HEK293 (cell line): ENCODE measurements at regions of chr16 and their contacts with region 1.

Region 1: DNA sequence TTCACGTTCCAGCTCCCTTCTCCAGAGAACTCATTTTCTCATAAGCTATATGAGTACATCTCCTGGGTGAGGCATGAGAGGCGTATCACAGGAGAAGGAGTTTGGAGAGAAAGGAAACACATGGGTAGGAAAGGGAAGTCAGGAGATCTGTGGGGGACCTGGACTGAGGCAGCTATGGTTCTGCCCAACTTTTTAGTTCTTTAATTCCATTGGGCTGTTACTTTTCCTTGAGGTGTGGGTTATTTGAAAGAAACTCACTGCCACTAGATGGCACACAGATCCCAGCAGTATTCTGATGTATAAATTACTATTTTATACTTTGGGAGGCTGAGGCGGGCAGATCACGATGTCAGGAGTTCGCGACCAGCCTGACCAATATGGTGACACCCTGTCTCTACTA is 63.6 kb downstream of the NUP93 start:
- H3K4me3 ChIP-seq: no peak overlapping the region
- H3K27ac ChIP-seq: no peak overlapping the region
- H3K4me1 ChIP-seq: peaks cover 11% of the 10 kb centered on the region
- CTCF ChIP-seq: no peak; the same call in 1 of the 2 replicates

Region 2: GRCh38 chr16:56851671-56852400 is 58.3 kb after region 1 on chr16:
- CTCF ChIA-PET with region 1: interaction called, 17 read pairs
- POLR2A ChIA-PET with region 1: no interaction called
- H3K4me3 ChIP-seq: no peak overlapping the region
- H3K27ac ChIP-seq: no peak overlapping the region
- H3K4me1 ChIP-seq: no peaks in the 10 kb centered on the region
- CTCF ChIP-seq: 0 out of 2 replicates have a peak, but pooled peaks have one; percentile 7

Region 3: DNA sequence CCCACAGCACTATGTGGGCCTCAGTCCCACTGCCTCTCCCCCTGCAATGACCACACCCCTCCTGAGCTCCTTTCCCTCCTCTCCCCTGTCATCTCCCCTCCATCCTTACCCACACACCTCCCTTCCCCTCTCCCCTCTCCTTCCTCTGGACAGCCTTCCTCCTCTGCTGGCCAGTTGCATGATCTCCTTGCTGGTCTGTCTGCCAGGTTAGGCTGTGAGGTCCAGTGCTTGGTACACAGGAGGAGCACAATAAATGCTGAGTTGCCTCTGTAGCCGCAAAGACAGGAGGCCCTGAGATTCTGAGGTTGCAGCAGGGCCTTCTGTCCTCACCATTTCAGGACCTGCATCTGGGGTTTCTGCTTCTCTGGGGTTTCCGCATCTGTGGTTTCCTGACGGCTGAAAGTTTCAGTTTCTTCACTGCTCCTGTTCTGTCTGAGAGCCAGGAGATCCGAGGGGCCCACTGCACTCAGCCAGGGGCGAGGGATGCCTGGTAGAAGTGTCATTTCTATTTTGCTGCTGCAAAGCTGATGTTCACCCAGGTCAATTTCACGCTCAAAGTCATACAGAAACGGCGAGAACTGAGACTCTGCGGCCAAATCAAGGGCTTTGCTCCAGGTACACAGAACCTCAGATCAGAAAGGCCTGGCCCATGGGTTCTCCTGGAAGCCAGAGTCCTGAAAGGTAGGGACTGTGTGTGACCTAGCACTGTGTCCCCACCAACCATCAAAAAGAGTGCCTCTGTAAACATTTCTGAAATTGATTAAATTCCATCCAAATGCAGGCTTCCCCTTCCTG is 66.9 kb after region 1 on chr16:
- CTCF ChIA-PET with region 1: interaction called, 17 read pairs
- POLR2A ChIA-PET with region 1: no interaction called
- H3K4me3 ChIP-seq: no peak overlapping the region
- H3K27ac ChIP-seq: no peak overlapping the region
- H3K4me1 ChIP-seq: peaks cover 12% of the 10 kb centered on the region
- CTCF ChIP-seq: no peak

Region 4: GRCh38 chr16:56950881-56951771 is 157.6 kb after region 1 on chr16:
- CTCF ChIA-PET with region 1: interaction called, 10 read pairs
- POLR2A ChIA-PET with region 1: no interaction called
- H3K4me3 ChIP-seq: no peak overlapping the region
- H3K27ac ChIP-seq: no peak overlapping the region
- H3K4me1 ChIP-seq: no peaks in the 10 kb centered on the region
- CTCF ChIP-seq: peak; percentile 94